Natural killer cell (primary cell): ENCODE measurements at regions of chr4 and their contacts with region 1.

Region 1: DNA sequence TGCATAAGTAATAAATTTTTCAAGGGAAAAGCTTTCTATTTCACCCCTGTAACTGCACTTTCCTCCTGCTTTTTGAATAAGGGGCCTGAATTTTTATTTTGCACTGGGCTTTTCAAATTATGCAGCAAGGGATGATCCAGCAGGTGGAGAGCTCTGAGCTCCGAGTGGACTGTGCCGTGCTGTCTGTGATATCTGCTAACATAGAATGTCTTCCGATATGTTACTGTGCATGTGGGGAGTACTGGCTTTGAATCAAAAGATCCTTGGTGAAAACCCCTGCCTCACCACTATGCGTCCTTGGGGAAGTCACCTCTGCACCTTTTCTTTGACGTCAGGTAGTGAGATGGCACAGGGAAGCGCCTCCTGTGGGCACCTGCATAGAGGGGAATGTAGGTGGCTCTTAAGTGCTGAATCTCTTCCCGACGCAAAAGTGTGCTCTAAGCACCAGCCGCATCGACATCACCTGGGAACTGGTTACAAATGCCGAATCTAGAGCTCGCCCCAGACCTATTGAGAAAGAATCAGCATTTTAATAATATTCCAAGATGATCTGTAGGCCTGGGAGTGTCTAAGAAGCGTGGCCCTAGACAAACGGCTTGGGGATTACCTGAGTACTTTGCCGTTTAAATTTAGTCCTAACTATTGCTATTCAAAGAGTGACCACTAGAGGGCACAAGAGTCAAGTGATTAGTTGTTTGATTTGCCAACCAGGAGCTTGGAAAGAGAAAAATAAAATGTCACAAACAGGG is 19.2 kb upstream of the WFS1 start:
- DNase-seq: peak in 1 of 2 donors; percentile 85
- ATAC-seq: peak; percentile 68 to 77 (median 72)
- H3K4me3 ChIP-seq: no peak overlapping the region
- H3K4me3 Mint-ChIP-seq: no peak overlapping the region
- H3K27ac ChIP-seq: no peak overlapping the region
- H3K27ac Mint-ChIP-seq: no peak overlapping the region
- H3K4me1 ChIP-seq: peaks cover 3% of the 10 kb centered on the region
- H3K4me1 Mint-ChIP-seq: peaks cover 5% of the 10 kb centered on the region in 2 donors
- H3K27me3 ChIP-seq: no peaks in the 10 kb centered on the region
- H3K27me3 Mint-ChIP-seq: peaks cover 32 to 50% of the 10 kb centered on the region in 2 donors
- CTCF ChIP-seq: peak; percentile 78

Region 2: DNA sequence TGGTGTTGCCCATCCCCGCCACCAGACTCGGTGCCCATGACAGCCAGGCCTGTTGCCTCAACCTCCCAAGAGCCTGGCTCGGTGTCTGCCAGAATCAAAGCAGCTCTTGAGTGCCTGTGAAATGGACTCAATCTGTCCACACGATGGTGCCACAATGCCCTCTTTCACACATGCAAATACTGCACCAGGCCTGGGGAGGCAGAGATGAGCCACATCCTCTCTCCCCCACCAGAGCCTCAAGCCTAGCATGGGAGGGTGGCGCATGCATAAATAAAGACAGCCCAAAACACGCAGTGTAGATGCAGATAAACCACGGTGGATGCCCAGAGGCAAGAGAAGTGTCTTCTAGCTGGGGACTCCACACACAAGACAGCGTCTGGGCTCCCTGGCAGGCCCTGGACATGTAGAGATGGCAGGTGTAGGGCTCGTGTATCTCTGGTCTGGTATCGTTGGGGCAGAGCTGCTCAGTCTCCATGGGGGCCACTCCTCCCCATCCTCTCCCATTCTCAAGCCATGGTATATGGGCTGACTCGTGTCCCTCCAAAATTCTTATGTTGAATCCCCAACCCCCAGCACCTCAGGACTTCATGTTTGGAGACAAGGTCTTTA is 115.7 kb before region 1 on chr4:
- intact Hi-C with region 1: loop called (anchors 5 kb)
- DNase-seq: peak; percentile 28 to 81
- ATAC-seq: peak; percentile 88 to 99 (median 91)
- H3K4me3 ChIP-seq: no peak overlapping the region
- H3K4me3 Mint-ChIP-seq: no peak overlapping the region
- H3K27ac ChIP-seq: no peak overlapping the region
- H3K27ac Mint-ChIP-seq: peak overlapping the region in 1 of 2 donors; percentile 80
- H3K4me1 ChIP-seq: peaks cover 5% of the 10 kb centered on the region
- H3K4me1 Mint-ChIP-seq: peaks cover 0 to 22% of the 10 kb centered on the region in 2 donors
- H3K27me3 ChIP-seq: no peaks in the 10 kb centered on the region
- H3K27me3 Mint-ChIP-seq: no peaks in the 10 kb centered on the region
- CTCF ChIP-seq: peak; percentile 18

Region 3: DNA sequence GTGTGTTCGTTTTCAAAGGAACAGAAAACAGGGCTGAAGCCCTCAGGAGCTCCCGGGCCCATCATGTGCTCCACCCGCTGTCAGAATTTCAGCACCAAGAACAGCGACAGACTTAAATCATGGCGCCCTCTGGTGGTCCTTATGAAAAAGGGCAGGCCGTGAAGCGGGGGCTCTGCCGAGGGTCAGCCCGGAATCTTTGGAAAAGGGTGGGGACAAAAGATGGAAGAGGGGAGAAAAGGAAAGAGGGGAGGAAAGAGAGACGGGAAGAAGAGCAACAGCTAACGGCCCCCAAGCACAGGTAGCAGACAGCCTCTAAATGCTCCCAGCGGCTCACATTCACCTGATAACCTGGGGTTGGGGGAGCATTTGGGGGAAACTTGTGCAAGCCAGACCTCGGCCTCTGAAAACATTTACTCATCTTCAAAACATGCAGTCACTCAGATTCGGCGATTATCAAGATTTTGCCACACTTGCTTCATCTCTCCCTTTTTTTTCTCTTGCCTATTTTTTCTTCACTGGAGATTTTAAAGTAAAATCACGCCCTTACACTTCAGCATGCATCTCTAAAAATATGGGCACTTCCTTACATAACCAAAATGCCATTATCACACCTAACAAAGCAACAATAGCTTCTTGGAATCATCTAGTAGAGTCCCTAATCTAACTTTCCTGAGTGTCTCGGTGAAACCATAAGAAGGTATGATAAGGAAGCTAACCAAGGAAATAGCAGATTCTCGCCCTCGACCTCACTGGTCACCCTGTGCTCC is 296.5 kb after region 1 on chr4:
- intact Hi-C with region 1: loop called (anchors 5 kb)
- DNase-seq: peak; percentile 39 to 86
- ATAC-seq: peak; percentile 77 to 91 (median 86)
- H3K4me3 ChIP-seq: no peak overlapping the region
- H3K4me3 Mint-ChIP-seq: no peak overlapping the region
- H3K27ac ChIP-seq: no peak overlapping the region
- H3K27ac Mint-ChIP-seq: no peak overlapping the region
- H3K4me1 ChIP-seq: no peaks in the 10 kb centered on the region
- H3K4me1 Mint-ChIP-seq: peaks cover 5 to 7% of the 10 kb centered on the region in 2 donors
- H3K27me3 ChIP-seq: peaks cover 5% of the 10 kb centered on the region
- H3K27me3 Mint-ChIP-seq: peaks cover 21 to 47% of the 10 kb centered on the region in 2 donors
- CTCF ChIP-seq: peak; percentile 85